Transverse colon (tissue), 4 donors: ENCODE measurements at regions of chr18 and their contacts with region 1.

Region 1: DNA sequence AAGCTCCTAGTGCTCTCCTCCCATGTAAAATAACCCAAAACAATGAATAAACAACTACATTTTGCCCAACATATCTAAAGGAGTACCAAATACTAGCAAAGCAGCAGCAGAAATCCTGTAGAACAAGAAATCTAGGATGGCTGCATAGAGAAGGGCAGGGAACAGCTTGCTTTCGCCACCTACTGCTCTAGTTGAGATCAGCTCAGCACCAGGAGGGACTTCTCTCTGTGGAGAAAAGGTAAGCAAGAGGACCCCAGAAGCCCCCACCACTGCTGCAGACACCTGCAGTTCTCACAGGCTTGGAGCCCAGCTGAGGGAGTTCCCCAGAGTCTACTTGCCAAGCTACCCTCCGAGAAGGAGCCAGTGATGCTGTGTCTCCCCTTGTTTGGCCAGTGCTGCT is 243.0 kb upstream of the CHST9 start:
- DNase-seq: no peak
- H3K4me3 ChIP-seq: no peak overlapping the region
- H3K27ac ChIP-seq: no peak overlapping the region
- H3K4me1 ChIP-seq: no peaks in the 10 kb centered on the region
- H3K27me3 ChIP-seq: no peaks in the 10 kb centered on the region
- CTCF ChIP-seq: no peak
- EP300 ChIP-seq: no peak
- POLR2A ChIP-seq: no peak

Region 2: GRCh38 chr18:27314996-27315395 is 113.1 kb before region 1 on chr18:
- in situ Hi-C with region 1: no loop called
- intact Hi-C with region 1: no loop called
- DNase-seq: no peak
- H3K4me3 ChIP-seq: no peak overlapping the region
- H3K27ac ChIP-seq: no peak overlapping the region
- H3K4me1 ChIP-seq: no peaks in the 10 kb centered on the region
- H3K27me3 ChIP-seq: no peaks in the 10 kb centered on the region
- CTCF ChIP-seq: no peak
- EP300 ChIP-seq: no peak
- POLR2A ChIP-seq: no peak

Region 3: GRCh38 chr18:27349284-27349882 is 78.7 kb before region 1 on chr18:
- in situ Hi-C with region 1: loop called in 1 of 4 experiments (anchors 25 kb)
- intact Hi-C with region 1: no loop called
- DNase-seq: no peak
- H3K4me3 ChIP-seq: no peak overlapping the region
- H3K27ac ChIP-seq: no peak overlapping the region
- H3K4me1 ChIP-seq: no peaks in the 10 kb centered on the region
- H3K27me3 ChIP-seq: no peaks in the 10 kb centered on the region
- CTCF ChIP-seq: no peak
- EP300 ChIP-seq: no peak
- POLR2A ChIP-seq: no peak

Region 4: GRCh38 chr18:27363872-27364271 is 64.2 kb before region 1 on chr18:
- in situ Hi-C with region 1: no loop called
- intact Hi-C with region 1: no loop called
- DNase-seq: no peak
- H3K4me3 ChIP-seq: no peak overlapping the region
- H3K27ac ChIP-seq: no peak overlapping the region
- H3K4me1 ChIP-seq: no peaks in the 10 kb centered on the region
- H3K27me3 ChIP-seq: no peaks in the 10 kb centered on the region
- CTCF ChIP-seq: peak in 2 of 5 experiments; percentile 5 to 8
- EP300 ChIP-seq: no peak
- POLR2A ChIP-seq: no peak